CD8-positive, alpha-beta memory T cell (primary cell): ENCODE measurements at regions of chrX and their contacts with region 1.

Region 1: GRCh38 chrX:119004920-119005524 is 30.6 kb downstream of the LONRF3 start:
- DNase-seq: peak; percentile 12 to 49 (median 22)
- H3K4me3 ChIP-seq: no peak overlapping the region
- H3K4me3 Mint-ChIP-seq: no peak overlapping the region
- H3K27ac ChIP-seq: no peak overlapping the region
- H3K27ac Mint-ChIP-seq: no peak overlapping the region
- H3K4me1 ChIP-seq: no peaks in the 10 kb centered on the region
- H3K4me1 Mint-ChIP-seq: peaks cover 0 to 6% (median 0%) of the 10 kb centered on the region in 3 donors
- H3K27me3 ChIP-seq: no peaks in the 10 kb centered on the region
- H3K27me3 Mint-ChIP-seq: peaks cover 3 to 7% of the 10 kb centered on the region in 2 donors

Region 2: GRCh38 chrX:119015407-119016237 is 10.6 kb after region 1 on chrX:
- CTCF ChIA-PET with region 1: interaction called, 10 read pairs
- POLR2A ChIA-PET with region 1: no interaction called
- DNase-seq: no peak
- H3K4me3 ChIP-seq: no peak overlapping the region
- H3K4me3 Mint-ChIP-seq: no peak overlapping the region
- H3K27ac ChIP-seq: no peak overlapping the region
- H3K27ac Mint-ChIP-seq: peak overlapping the region in 2 of 8 donors; percentile 58 to 65
- H3K4me1 ChIP-seq: no peaks in the 10 kb centered on the region
- H3K4me1 Mint-ChIP-seq: no peaks in the 10 kb centered on the region
- H3K27me3 ChIP-seq: no peaks in the 10 kb centered on the region
- H3K27me3 Mint-ChIP-seq: peaks cover 0 to 9% of the 10 kb centered on the region in 2 donors

Region 3: DNA sequence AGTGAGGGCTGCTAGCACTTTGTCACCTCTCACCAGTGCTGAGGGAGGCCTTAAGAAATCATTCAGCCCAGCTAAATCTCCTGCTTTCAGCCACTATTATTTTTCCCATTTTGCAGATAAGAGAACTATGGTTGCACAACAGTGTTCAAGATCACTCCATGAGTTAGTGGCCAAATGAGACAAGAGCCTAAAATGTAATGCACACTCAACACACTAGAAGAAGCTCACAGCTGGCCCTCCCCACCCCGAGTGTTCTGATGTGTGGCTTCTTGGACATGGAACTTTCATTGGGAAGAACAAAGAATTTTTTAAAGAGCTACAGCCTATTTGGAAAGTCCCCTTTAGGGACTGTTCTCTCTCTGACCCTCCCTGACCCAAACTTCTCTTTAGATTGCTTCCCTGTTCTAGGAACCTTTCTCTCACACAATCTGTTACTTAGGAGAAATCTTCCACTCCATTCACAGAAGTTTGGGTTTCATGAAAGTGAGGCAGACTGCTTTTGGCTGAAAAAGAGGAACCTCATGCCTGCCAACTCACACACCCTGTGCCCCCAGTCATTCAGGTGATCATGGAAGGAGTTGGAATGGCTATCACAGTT is 23.8 kb after region 1 on chrX:
- CTCF ChIA-PET with region 1: no interaction called
- POLR2A ChIA-PET with region 1: no interaction called
- DNase-seq: no peak
- H3K4me3 ChIP-seq: no peak overlapping the region
- H3K4me3 Mint-ChIP-seq: no peak overlapping the region
- H3K27ac ChIP-seq: no peak overlapping the region
- H3K27ac Mint-ChIP-seq: no peak overlapping the region
- H3K4me1 ChIP-seq: no peaks in the 10 kb centered on the region
- H3K4me1 Mint-ChIP-seq: no peaks in the 10 kb centered on the region
- H3K27me3 ChIP-seq: no peaks in the 10 kb centered on the region
- H3K27me3 Mint-ChIP-seq: peaks cover 0 to 9% of the 10 kb centered on the region in 2 donors

Region 4: GRCh38 chrX:119062750-119063374 is 57.8 kb after region 1 on chrX:
- CTCF ChIA-PET with region 1: no interaction called
- POLR2A ChIA-PET with region 1: no interaction called
- DNase-seq: no peak
- H3K4me3 ChIP-seq: no peak overlapping the region
- H3K4me3 Mint-ChIP-seq: no peak overlapping the region
- H3K27ac ChIP-seq: no peak overlapping the region
- H3K27ac Mint-ChIP-seq: peak overlapping the region in 1 of 8 donors; percentile 83
- H3K4me1 ChIP-seq: no peaks in the 10 kb centered on the region
- H3K4me1 Mint-ChIP-seq: no peaks in the 10 kb centered on the region
- H3K27me3 ChIP-seq: no peaks in the 10 kb centered on the region
- H3K27me3 Mint-ChIP-seq: peaks cover 0 to 3% of the 10 kb centered on the region in 2 donors

Region 5: DNA sequence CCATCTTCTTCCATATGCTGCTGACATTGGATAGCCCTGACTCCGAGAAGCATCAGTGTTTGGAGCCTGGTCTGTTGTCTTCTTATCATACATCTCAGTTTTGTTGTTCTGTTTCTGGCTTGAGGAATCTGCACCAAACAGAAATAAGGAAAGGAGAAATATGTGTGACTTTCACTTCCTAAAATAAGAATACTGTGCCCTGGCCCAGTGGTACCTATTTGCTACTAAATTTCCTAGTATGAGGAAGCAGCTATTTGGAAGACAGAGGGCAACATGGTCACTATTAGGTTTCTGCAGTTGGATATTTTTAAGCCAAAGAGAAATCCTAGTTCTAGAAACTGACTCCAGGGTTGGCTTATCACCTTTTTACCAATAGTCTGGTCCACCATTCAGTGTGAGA is 84.6 kb after region 1 on chrX:
- CTCF ChIA-PET with region 1: no interaction called
- POLR2A ChIA-PET with region 1: no interaction called
- DNase-seq: no peak
- H3K4me3 ChIP-seq: no peak overlapping the region
- H3K4me3 Mint-ChIP-seq: no peak overlapping the region
- H3K27ac ChIP-seq: no peak overlapping the region
- H3K27ac Mint-ChIP-seq: no peak overlapping the region
- H3K4me1 ChIP-seq: no peaks in the 10 kb centered on the region
- H3K4me1 Mint-ChIP-seq: no peaks in the 10 kb centered on the region
- H3K27me3 ChIP-seq: no peaks in the 10 kb centered on the region
- H3K27me3 Mint-ChIP-seq: peaks cover 9 to 13% of the 10 kb centered on the region in 2 donors